B cell (primary cell): ENCODE measurements at regions of chr11 and their contacts with region 1.

Region 1: DNA sequence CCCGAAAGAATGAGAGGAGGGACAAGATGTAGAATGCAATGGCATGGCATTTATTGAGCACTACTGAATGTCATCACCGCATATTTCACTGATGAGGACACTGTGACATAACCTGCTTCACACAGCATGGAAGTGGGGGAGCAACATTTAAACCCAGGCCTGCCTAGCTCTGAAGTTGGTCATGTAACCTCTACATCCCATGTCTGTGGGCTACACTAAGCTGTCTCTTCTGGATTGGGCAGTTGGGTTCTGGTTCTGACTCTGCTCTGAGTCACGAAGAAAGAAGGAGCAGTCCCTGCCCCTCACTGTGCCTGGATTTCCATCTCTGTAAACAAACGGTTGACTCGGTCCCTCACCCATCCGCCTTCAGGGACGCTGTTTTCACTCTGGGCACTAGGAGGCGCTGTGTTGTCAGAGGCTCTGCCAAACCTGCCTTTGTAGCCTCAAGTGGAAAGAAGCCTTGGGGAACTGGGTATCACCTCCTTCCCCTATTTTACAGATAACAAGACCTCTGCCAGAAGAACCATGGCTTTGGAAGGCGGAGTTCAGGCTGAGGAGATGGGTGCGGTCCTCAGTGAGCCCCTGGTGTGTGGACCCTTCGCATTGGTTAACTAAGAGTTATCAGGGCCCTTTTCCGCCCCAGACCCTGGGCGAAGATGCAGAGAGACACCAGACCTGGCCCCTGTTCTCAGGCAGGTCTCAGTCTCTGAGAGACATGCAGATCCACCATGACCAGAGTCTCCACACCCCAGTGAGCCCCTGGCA is 12.7 kb upstream of the ARHGEF17 start:
- DNase-seq: peak; percentile 82
- ATAC-seq: peak; percentile 86
- H3K4me3 ChIP-seq: no peak overlapping the region
- H3K4me3 Mint-ChIP-seq: no peak overlapping the region
- H3K27ac ChIP-seq: no peak overlapping the region
- H3K27ac Mint-ChIP-seq: no peak overlapping the region
- H3K4me1 ChIP-seq: peaks cover 4 to 8% of the 10 kb centered on the region in 2 donors
- H3K4me1 Mint-ChIP-seq: peaks cover 8% of the 10 kb centered on the region
- H3K27me3 ChIP-seq: peaks cover 0 to 42% (median 0%) of the 10 kb centered on the region in 4 experiments
- H3K27me3 Mint-ChIP-seq: peaks cover 19% of the 10 kb centered on the region
- CTCF ChIP-seq: peak; percentile 90

Region 2: GRCh38 chr11:73307323-73308002 is 12.1 kb after region 1 on chr11:
- CTCF ChIA-PET with region 1: interaction called, 29 read pairs
- POLR2A ChIA-PET with region 1: no interaction called
- intact Hi-C with region 1: no loop called
- DNase-seq: peak; percentile 91
- ATAC-seq: peak; percentile 76
- H3K4me3 ChIP-seq: peak overlapping the region; percentile 51 to 84 (median 65)
- H3K4me3 Mint-ChIP-seq: peak overlapping the region; percentile 89
- H3K27ac ChIP-seq: no peak overlapping the region
- H3K27ac Mint-ChIP-seq: peak overlapping the region; percentile 51
- H3K4me1 ChIP-seq: peaks cover 20 to 25% of the 10 kb centered on the region in 2 donors
- H3K4me1 Mint-ChIP-seq: peaks cover 13% of the 10 kb centered on the region
- H3K27me3 ChIP-seq: peaks cover 0 to 52% (median 18%) of the 10 kb centered on the region in 4 experiments
- H3K27me3 Mint-ChIP-seq: peaks cover 24% of the 10 kb centered on the region
- CTCF ChIP-seq: peak; percentile 72